CD8-positive, alpha-beta memory T cell (primary cell): ENCODE measurements at regions of chr17 and their contacts with region 1.

Region 1: DNA sequence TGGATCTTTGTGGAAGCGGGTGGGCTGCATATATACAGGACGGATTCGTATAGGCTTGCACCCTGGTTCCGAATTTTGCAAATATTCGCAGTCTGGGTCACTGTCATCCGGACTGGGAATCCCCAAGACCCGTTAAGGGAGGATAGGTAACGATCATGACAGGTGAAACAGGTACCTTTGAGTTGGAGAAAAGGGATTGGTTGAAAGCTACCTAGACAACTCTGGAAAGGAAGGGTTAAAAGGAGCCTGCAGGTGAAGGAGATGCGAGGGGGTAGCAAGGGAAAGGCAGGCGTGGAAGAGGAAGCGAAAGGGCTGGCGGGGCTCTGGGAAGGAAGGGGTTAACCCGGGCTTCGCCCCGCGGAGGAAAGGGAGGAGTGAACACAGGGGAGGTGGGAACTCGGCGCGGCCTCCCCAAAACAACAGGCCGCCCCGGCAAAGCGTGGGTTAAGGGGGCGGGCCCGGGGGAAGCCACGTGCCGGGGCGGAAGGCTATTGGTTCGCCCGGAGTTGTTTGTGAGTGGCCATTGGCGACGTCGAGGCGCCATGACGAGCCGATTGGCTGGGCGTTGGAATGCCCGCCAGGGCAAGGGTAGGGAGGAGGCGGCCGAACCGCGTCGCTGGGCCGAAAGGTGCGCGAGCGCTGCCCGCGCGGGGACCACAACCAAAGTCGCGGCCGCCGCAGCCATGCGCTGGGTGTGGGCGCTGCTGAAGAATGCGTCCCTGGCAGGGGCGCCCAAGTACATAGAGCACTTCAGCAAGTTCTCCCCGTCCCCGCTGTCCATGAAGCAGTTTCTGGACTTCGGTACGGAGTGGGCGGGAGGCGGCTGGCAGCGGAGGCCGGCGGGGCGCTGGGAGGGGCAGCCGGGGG is at the start of gene PDK2:
- DNase-seq: peak; percentile 93 to 98 (median 97)
- H3K4me3 ChIP-seq: peak within 1 kb of the TSS; percentile 100
- H3K4me3 Mint-ChIP-seq: peak within 1 kb of the TSS; percentile 88 to 100 (median 97)
- H3K27ac ChIP-seq: peak within 1 kb of the TSS; percentile 79
- H3K27ac Mint-ChIP-seq: peak within 1 kb of the TSS; percentile 88 to 98 (median 96)
- H3K4me1 ChIP-seq: peaks cover 17% of the 10 kb centered on the region
- H3K4me1 Mint-ChIP-seq: peaks cover 21 to 46% (median 27%) of the 10 kb centered on the region in 3 donors
- H3K27me3 ChIP-seq: no peaks in the 10 kb centered on the region
- H3K27me3 Mint-ChIP-seq: no peaks in the 10 kb centered on the region
- total RNA-seq, gene PDK2: 19.5 to 22.4 TPM

Region 2: GRCh38 chr17:50026901-50027630 is 67.9 kb before region 1 on chr17:
- CTCF ChIA-PET with region 1: interaction called, 75 read pairs
- POLR2A ChIA-PET with region 1: no interaction called
- DNase-seq: peak; percentile 61 to 81 (median 68)
- H3K4me3 ChIP-seq: no peak overlapping the region
- H3K4me3 Mint-ChIP-seq: peak overlapping the region in 3 of 7 donors; percentile 23 to 51 (median 44)
- H3K27ac ChIP-seq: no peak overlapping the region
- H3K27ac Mint-ChIP-seq: peak overlapping the region in 1 of 8 donors; percentile 50
- H3K4me1 ChIP-seq: peaks cover 8% of the 10 kb centered on the region
- H3K4me1 Mint-ChIP-seq: peaks cover 8 to 14% (median 10%) of the 10 kb centered on the region in 3 donors
- H3K27me3 ChIP-seq: peaks cover 10% of the 10 kb centered on the region
- H3K27me3 Mint-ChIP-seq: peaks cover 13 to 37% of the 10 kb centered on the region in 2 donors

Region 3: GRCh38 chr17:50076591-50077235 is 18.3 kb before region 1 on chr17:
- CTCF ChIA-PET with region 1: interaction called, 10 read pairs
- POLR2A ChIA-PET with region 1: no interaction called
- DNase-seq: no peak
- H3K4me3 ChIP-seq: no peak overlapping the region
- H3K4me3 Mint-ChIP-seq: no peak overlapping the region
- H3K27ac ChIP-seq: no peak overlapping the region
- H3K27ac Mint-ChIP-seq: peak overlapping the region in 1 of 8 donors; percentile 60
- H3K4me1 ChIP-seq: no peaks in the 10 kb centered on the region
- H3K4me1 Mint-ChIP-seq: no peaks in the 10 kb centered on the region
- H3K27me3 ChIP-seq: no peaks in the 10 kb centered on the region
- H3K27me3 Mint-ChIP-seq: peaks cover 0 to 4% of the 10 kb centered on the region in 2 donors

Region 4: DNA sequence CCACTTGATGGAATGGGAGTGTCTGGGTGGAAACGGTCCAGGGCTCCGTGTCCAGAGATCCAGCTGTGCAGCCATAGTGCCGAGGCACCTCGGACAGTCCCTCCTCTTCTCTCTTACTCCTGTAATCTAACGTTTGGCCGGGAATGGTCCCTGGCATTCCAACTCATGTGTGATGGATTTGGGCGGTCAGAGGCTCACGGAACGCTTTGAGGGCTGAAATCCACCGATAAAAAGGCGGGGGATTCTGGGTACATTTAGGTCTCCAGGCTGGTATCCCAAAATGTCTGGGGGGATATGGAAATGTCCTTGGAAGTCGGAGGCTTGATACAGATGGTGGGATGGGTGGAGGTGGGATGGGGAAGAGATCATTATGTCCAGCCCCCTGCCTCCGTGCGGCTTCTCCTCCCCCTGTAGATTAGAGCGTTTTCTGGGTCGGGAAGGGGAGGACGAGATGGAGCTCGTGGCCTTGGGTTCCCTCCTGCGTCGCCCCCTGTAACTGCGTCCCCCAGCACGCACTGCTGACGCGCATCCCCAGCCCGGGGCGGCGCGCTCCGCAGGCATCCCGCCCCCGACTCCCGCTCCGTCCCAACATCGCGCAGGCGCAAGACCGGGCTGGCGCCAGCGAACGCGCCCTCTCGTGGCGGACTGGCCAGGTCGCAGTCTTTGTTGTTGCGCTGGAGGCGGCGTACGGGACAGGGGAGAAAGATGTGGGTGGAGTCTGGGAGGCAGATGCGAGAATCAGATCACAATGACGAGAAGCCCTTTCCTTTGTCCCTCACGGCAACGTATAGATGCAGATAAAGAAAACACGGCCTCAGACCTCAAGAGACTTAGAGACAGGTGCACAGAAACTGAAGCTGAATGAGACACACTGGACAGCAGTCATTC is 66.3 kb after region 1 on chr17:
- CTCF ChIA-PET with region 1: interaction called, 16 read pairs
- POLR2A ChIA-PET with region 1: no interaction called
- DNase-seq: peak; percentile 93 to 96 (median 93)
- H3K4me3 ChIP-seq: peak overlapping the region; percentile 78
- H3K4me3 Mint-ChIP-seq: peak overlapping the region; percentile 1 to 82 (median 54)
- H3K27ac ChIP-seq: no peak overlapping the region
- H3K27ac Mint-ChIP-seq: peak overlapping the region; percentile 21 to 96 (median 89)
- H3K4me1 ChIP-seq: peaks cover 34% of the 10 kb centered on the region
- H3K4me1 Mint-ChIP-seq: peaks cover 24 to 32% (median 29%) of the 10 kb centered on the region in 3 donors
- H3K27me3 ChIP-seq: no peaks in the 10 kb centered on the region
- H3K27me3 Mint-ChIP-seq: peaks cover 0 to 3% of the 10 kb centered on the region in 2 donors

Region 5: GRCh38 chr17:50177983-50178834 is 83.2 kb after region 1 on chr17:
- CTCF ChIA-PET with region 1: interaction called, 16 read pairs
- POLR2A ChIA-PET with region 1: no interaction called
- DNase-seq: peak in 4 of 5 donors; percentile 11 to 59 (median 23)
- H3K4me3 ChIP-seq: no peak overlapping the region
- H3K4me3 Mint-ChIP-seq: peak overlapping the region in 2 of 7 donors; percentile 63 to 80
- H3K27ac ChIP-seq: no peak overlapping the region
- H3K27ac Mint-ChIP-seq: peak overlapping the region in 3 of 8 donors; percentile 20 to 64 (median 26)
- H3K4me1 ChIP-seq: peaks cover under 1% of the 10 kb centered on the region
- H3K4me1 Mint-ChIP-seq: peaks cover 7 to 11% (median 10%) of the 10 kb centered on the region in 3 donors
- H3K27me3 ChIP-seq: no peaks in the 10 kb centered on the region
- H3K27me3 Mint-ChIP-seq: no peaks in the 10 kb centered on the region